ENCODE measurements at regions of chr7 and their contacts with region 1.

Region 1: DNA sequence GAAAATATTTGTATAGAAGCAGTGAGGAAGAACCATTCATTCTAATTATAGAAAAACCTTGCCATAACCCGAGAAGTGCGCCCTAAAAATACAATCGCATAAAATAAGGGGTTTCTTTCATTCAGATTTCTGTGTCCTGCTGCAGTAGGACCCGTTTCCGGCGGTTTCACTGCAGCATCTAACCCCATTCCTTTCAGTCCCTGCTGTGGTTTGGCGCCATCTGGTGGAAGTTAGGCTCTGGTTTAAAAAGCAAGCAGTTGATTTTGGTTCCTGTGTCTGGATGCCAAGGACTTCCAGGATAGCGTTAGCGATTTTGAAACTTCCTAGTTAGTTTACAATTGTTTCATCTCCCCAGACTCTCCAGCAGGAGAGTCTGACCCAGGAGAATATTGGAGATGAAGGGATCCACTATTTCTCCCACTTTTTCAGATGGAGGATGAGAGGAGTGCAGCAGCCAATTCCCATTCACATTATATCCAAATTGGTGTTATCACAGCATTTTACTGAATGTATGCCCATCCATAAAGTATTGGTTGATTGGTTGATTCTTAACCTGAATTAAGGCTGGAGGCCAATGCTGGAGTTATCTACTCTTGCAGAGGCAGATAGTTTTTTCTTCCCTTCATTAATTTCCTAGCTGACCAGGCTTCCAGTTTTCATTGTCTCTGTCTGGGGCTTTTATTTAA is 128.8 kb upstream of the CACNA2D1 start:
- DNase-seq: peak; percentile 24
- H3K4me3 ChIP-seq: no peak overlapping the region
- H3K27me3 ChIP-seq: peaks cover 2% of the 10 kb centered on the region; the same call in 1 of the 2 replicates
- CTCF ChIP-seq: peak; percentile 89

Region 2: GRCh38 chr7:82044497-82045080 is 527.7 kb before region 1 on chr7:
- CTCF ChIA-PET with region 1: interaction called, 12 read pairs
- POLR2A ChIA-PET with region 1: no interaction called
- DNase-seq: no peak
- H3K4me3 ChIP-seq: no peak overlapping the region
- H3K27me3 ChIP-seq: no peaks in the 10 kb centered on the region
- CTCF ChIP-seq: peak; percentile 59